Common myeloid progenitor, CD34-positive (primary cell): ENCODE measurements at regions of chr1 and their contacts with region 1.

Region 1: GRCh38 chr1:38012363-38013226 is at the start of gene UTP11:
- DNase-seq: peak; percentile 98 to 99 (median 98)
- H3K4me3 ChIP-seq: peak within 1 kb of the TSS; percentile 58 to 98 (median 84)
- H3K27ac ChIP-seq: peak within 1 kb of the TSS; percentile 90 to 96
- H3K4me1 ChIP-seq: peaks cover 9 to 67% (median 46%) of the 10 kb centered on the region in 4 experiments
- H3K27me3 ChIP-seq: no peaks in the 10 kb centered on the region

Region 2: GRCh38 chr1:37634244-37634991 is 378.2 kb before region 1 on chr1 and contains the start of gene RSPO1:
- CTCF ChIA-PET with region 1: no interaction called
- POLR2A ChIA-PET with region 1: no interaction called
- DNase-seq: peak in 2 of 3 donors; percentile 14 to 26
- H3K4me3 ChIP-seq: peak within 1 kb of the TSS in 2 of 7 experiments; percentile 23 to 32
- H3K27ac ChIP-seq: no peak within 1 kb of the TSS
- H3K4me1 ChIP-seq: peaks cover 0 to 11% (median 5%) of the 10 kb centered on the region in 4 experiments
- H3K27me3 ChIP-seq: peaks cover 13 to 100% (median 60%) of the 10 kb centered on the region in 5 experiments

Region 3: DNA sequence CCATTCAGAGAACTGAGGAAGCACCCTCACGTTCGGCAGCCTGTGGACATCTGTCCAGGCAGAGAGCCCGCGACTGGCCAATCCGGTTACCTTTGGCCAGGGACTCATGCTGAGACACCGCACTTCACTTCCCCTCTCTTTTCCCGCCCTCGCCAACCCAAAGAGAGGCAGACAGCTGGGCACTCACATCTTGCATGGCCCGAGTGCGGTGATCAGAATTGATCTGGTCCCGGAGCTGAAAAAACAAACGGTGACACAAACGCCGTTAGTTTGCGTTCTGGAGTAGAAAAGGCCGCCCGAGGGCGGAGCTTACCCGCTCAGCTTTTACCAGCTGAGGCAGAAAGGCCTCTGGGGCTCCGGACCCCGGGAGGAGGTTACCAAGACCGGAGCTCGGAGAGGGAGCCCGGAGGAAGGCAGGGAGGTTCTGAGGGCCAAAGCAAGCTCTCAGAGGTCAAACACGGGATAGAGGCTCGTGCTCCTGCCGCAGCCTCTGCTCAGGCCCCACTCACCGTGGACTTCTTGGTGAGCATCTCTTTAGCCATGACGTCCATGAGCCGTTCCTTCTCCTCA is 23.1 kb before region 1 on chr1:
- CTCF ChIA-PET with region 1: interaction called, 445 read pairs
- POLR2A ChIA-PET with region 1: interaction called, 4 read pairs
- DNase-seq: peak in 2 of 3 donors; percentile 41 to 65
- H3K4me3 ChIP-seq: peak overlapping the region; percentile 58 to 99 (median 97)
- H3K27ac ChIP-seq: peak overlapping the region; percentile 74 to 87
- H3K4me1 ChIP-seq: peaks cover 5 to 15% (median 10%) of the 10 kb centered on the region in 4 experiments
- H3K27me3 ChIP-seq: no peaks in the 10 kb centered on the region

Region 4: DNA sequence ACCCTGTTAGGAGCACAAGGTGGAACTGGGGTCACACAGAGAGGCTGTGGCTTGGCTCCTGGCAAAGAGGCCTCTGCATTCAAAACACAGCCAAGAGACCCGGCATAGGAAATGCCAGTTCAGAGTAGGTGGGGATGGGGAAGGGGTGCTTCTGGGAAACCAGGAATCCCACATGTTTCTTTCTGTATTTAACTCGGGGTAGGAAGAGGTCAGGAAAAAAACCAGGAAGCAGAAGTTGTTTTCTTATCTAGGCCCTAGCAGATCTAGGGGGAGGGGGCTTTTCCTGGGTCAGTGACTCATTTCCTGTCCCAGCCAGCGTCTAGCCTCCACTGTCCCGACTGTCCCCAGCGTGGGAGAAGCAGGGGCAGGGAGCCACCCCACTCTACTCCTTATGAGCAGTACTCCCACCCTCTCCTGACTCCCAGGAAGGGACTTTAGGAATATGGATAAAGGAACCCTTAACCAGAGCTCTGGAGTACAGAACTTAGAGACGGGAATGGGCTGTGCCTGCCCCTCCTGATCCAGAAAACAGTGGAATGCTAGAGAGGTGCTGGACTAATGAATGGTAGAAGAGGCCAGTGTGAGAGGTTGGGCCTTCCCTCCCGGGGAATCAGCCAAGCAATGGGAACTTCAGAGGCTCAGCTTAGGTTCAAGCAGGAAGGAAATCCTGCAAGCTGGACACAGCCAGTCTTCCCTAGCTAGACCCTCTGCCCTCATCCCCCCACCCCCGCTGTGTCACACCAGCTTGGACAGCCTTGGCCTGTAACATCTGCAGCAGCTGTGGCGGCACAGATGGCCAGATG is 13.0 kb before region 1 on chr1:
- CTCF ChIA-PET with region 1: interaction called, 445 read pairs
- POLR2A ChIA-PET with region 1: interaction called, 17 read pairs
- DNase-seq: peak; percentile 80 to 90 (median 85)
- H3K4me3 ChIP-seq: peak overlapping the region in 5 of 7 experiments; percentile 22 to 56 (median 36)
- H3K27ac ChIP-seq: peak overlapping the region; percentile 90 to 95
- H3K4me1 ChIP-seq: peaks cover 13 to 97% (median 94%) of the 10 kb centered on the region in 4 experiments
- H3K27me3 ChIP-seq: no peaks in the 10 kb centered on the region

Region 5: DNA sequence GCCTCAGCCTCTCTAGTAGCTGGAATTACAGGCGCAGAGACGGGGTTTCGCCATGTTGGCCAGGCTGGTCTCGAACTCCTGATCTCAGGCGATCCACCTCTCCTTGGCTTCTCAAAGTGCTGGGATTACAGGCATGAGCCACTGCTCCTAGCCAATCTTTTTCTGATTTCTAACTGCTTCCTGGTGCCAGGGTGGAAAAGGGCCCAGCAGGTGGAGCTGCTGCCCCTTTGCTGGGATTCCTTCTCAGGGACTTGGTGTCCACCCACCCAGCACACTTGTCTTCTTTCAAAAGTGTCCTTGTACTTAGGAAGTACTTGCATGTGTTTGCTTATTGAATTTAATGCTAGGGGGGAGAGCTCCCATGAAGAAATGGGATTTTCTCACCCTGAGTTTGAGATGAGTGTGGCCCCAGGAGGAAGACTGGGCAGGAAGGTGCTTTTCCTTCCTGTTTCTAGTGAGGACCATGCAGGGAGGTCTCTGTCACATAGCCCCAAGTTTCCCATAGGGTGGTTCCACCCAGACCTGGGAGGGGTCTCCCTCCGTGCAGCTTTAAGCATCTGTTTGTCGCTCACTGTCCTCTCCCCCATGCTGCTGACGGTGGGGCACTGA is 14.1 kb after region 1 on chr1:
- CTCF ChIA-PET with region 1: interaction called, 33 read pairs
- POLR2A ChIA-PET with region 1: no interaction called
- DNase-seq: peak; percentile 36 to 61 (median 59)
- H3K4me3 ChIP-seq: no peak overlapping the region
- H3K27ac ChIP-seq: no peak overlapping the region
- H3K4me1 ChIP-seq: peaks cover 3 to 65% (median 33%) of the 10 kb centered on the region in 4 experiments
- H3K27me3 ChIP-seq: peaks cover 0 to 7% (median 0%) of the 10 kb centered on the region in 5 experiments